ENCODE measurements at regions of chr12 and their contacts with region 1.

Region 1: DNA sequence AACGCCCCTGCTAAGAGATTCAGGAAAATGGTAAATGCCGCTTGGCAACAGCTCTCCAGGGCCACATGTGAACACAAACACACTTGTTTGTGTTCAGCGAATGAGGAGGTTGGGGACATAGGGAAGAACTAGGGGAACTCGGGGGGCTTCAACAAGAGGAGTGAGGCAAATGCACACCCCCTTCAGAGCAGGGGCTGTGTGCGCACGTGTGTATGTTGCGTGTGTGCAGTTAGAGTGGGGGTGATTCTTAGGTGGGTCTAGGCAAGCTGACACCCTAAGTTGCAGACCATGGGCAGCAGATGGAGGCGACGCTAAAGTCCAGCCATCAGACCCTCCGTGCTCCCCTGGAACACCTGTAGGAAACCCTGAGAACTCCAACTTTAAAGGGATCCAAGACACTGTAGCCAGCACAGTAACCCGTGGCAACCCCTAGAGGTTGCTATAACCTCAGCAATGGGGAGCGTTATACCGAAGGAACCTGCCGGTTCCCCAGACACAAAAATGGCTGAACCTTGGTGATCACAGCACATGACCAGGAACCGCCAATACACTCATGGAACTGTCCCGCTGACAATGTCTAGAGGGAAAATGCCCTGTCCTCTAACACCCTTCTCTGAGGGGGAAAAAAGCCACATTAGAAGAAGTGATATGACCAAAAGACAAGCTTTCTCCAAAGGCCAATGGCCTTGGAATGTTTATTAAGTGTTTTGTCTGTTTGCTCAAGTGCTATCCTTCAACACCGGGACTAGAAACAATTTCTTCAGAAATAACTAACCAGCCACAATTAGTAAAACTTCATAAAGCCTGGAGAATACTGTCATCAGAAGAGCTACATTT is 86.5 kb upstream of the CEP83 start:
- DNase-seq: peak in 5 of 10 donors; percentile 24 to 57 (median 46)
- H3K4me3 ChIP-seq: peak overlapping the region in 1 of 59 donors; percentile 26
- H3K27ac ChIP-seq: peak overlapping the region in 1 of 59 donors; percentile 22
- H3K27me3 ChIP-seq: no peaks in the 10 kb centered on the region
- CTCF ChIP-seq: peak; percentile 32 to 91 (median 81)

Region 2: GRCh38 chr12:94571556-94571955 is 25.4 kb after region 1 on chr12:
- intact Hi-C with region 1: no loop called
- DNase-seq: no peak
- H3K4me3 ChIP-seq: no peak overlapping the region
- H3K27ac ChIP-seq: peak overlapping the region in 7 of 59 donors; percentile 3 to 53 (median 28)
- H3K27me3 ChIP-seq: peaks cover 0 to 3% (median 0%) of the 10 kb centered on the region in 45 donors
- CTCF ChIP-seq: no peak

Region 3: GRCh38 chr12:94628819-94629472 is 82.8 kb after region 1 on chr12:
- intact Hi-C with region 1: no loop called
- DNase-seq: no peak
- H3K4me3 ChIP-seq: no peak overlapping the region
- H3K27ac ChIP-seq: peak overlapping the region in 5 of 59 donors; percentile 9 to 30 (median 24)
- H3K27me3 ChIP-seq: no peaks in the 10 kb centered on the region
- CTCF ChIP-seq: no peak

Region 4: GRCh38 chr12:94649349-94650142 is 103.4 kb after region 1 on chr12:
- intact Hi-C with region 1: loop called in 1 of 2 experiments (anchors 5 kb)
- DNase-seq: peak; percentile 12 to 75 (median 42)
- H3K4me3 ChIP-seq: peak overlapping the region; percentile 44 to 92 (median 75)
- H3K27ac ChIP-seq: peak overlapping the region in 58 of 59 donors; percentile 34 to 92 (median 83)
- H3K27me3 ChIP-seq: peaks cover 0 to 9% (median 0%) of the 10 kb centered on the region in 45 donors
- CTCF ChIP-seq: peak in 51 of 56 donors; percentile 10 to 64 (median 45)

Region 5: GRCh38 chr12:94762259-94762942 is 216.2 kb after region 1 on chr12:
- intact Hi-C with region 1: loop called (anchors 5 kb)
- DNase-seq: no peak
- H3K4me3 ChIP-seq: no peak overlapping the region
- H3K27ac ChIP-seq: no peak overlapping the region
- H3K27me3 ChIP-seq: no peaks in the 10 kb centered on the region
- CTCF ChIP-seq: no peak

Region 6: GRCh38 chr12:94980577-94980976 is 434.4 kb after region 1 on chr12:
- intact Hi-C with region 1: loop called in 1 of 2 experiments (anchors 5 kb)
- DNase-seq: no peak
- H3K4me3 ChIP-seq: no peak overlapping the region
- H3K27ac ChIP-seq: no peak overlapping the region
- H3K27me3 ChIP-seq: no peaks in the 10 kb centered on the region
- CTCF ChIP-seq: peak in 55 of 56 donors; percentile 18 to 68 (median 44)

Region 7: GRCh38 chr12:95072900-95073697 is 526.9 kb after region 1 on chr12 and contains the start of gene NR2C1:
- intact Hi-C with region 1: loop called in 1 of 2 experiments (anchors 5 kb)
- DNase-seq: peak; percentile 80 to 94 (median 92)
- H3K4me3 ChIP-seq: peak within 1 kb of the TSS; percentile 65 to 99 (median 94)
- H3K27ac ChIP-seq: peak within 1 kb of the TSS; percentile 51 to 98 (median 90)
- H3K27me3 ChIP-seq: no peaks in the 10 kb centered on the region
- CTCF ChIP-seq: no peak
- total RNA-seq, gene NR2C1: 38.6 to 107 (median 57.8) TPM

Region 8: GRCh38 chr12:95336390-95337067 is 790.4 kb after region 1 on chr12:
- intact Hi-C with region 1: loop called in 1 of 2 experiments (anchors 5 kb)
- DNase-seq: peak; percentile 47 to 89 (median 75)
- H3K4me3 ChIP-seq: peak overlapping the region in 41 of 59 donors; percentile 4 to 55 (median 26)
- H3K27ac ChIP-seq: peak overlapping the region in 53 of 59 donors; percentile 2 to 87 (median 47)
- H3K27me3 ChIP-seq: no peaks in the 10 kb centered on the region
- CTCF ChIP-seq: peak; percentile 59 to 95 (median 82)

Region 9: GRCh38 chr12:95532851-95533250 is 986.7 kb after region 1 on chr12:
- intact Hi-C with region 1: loop called in 1 of 2 experiments (anchors 10 kb)
- DNase-seq: no peak
- H3K4me3 ChIP-seq: no peak overlapping the region
- H3K27ac ChIP-seq: no peak overlapping the region
- H3K27me3 ChIP-seq: no peaks in the 10 kb centered on the region
- CTCF ChIP-seq: no peak